ENCODE measurements at regions of chrX and their contacts with region 1.

Region 1: DNA sequence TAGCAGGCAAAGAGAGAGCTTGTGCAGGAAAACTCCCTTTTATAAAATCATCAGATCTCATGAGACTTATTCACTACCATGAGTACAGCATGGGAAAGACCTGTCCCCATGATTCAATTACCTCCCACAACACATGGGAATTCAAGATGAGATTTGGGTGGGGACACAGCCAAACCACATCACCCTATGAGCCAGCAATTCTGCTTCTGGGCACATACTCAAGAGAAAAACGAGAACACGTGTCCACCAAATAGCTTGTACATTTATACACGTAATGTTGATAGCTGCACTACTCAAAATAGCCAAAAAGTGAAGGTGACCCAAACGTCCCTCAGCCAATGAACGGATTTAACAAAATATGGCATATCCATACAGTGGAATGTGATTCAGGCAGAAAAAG is 94.5 kb upstream of the DHRSX start:
- DNase-seq: no peak
- H3K4me3 Mint-ChIP-seq: no peak overlapping the region
- H3K27ac Mint-ChIP-seq: no peak overlapping the region
- H3K4me1 Mint-ChIP-seq: peaks cover 10% of the 10 kb centered on the region
- H3K27me3 Mint-ChIP-seq: no peaks in the 10 kb centered on the region
- CTCF ChIP-seq: no peak

Region 2: DNA sequence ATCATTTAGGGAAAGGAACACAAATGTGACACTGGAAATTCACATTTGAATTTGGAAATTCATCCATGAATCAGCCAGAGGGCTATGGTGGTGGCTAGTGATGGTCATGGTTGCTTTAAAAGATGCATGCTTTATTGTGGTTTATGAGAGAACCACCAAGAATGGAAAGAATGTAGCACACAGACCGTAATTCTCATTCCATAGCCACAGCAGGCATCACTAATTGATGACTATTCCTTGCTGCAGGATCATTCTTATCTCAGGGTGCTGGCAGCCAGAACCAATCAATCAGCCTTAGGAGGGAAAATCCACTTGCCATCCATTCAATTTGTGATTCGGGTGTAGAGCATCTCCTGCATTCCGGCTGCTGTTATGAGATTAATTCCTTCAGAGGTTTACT is 210.0 kb before region 1 on chrX:
- CTCF ChIA-PET with region 1: no interaction called
- intact Hi-C with region 1: loop called (anchors 10 kb)
- DNase-seq: no peak
- H3K4me3 Mint-ChIP-seq: no peak overlapping the region
- H3K27ac Mint-ChIP-seq: no peak overlapping the region
- H3K4me1 Mint-ChIP-seq: peaks cover 15% of the 10 kb centered on the region
- H3K27me3 Mint-ChIP-seq: no peaks in the 10 kb centered on the region
- CTCF ChIP-seq: no peak

Measured in Calu3 (cell line).